ENCODE measurements at regions of chr2 and their contacts with region 1.

Region 1: DNA sequence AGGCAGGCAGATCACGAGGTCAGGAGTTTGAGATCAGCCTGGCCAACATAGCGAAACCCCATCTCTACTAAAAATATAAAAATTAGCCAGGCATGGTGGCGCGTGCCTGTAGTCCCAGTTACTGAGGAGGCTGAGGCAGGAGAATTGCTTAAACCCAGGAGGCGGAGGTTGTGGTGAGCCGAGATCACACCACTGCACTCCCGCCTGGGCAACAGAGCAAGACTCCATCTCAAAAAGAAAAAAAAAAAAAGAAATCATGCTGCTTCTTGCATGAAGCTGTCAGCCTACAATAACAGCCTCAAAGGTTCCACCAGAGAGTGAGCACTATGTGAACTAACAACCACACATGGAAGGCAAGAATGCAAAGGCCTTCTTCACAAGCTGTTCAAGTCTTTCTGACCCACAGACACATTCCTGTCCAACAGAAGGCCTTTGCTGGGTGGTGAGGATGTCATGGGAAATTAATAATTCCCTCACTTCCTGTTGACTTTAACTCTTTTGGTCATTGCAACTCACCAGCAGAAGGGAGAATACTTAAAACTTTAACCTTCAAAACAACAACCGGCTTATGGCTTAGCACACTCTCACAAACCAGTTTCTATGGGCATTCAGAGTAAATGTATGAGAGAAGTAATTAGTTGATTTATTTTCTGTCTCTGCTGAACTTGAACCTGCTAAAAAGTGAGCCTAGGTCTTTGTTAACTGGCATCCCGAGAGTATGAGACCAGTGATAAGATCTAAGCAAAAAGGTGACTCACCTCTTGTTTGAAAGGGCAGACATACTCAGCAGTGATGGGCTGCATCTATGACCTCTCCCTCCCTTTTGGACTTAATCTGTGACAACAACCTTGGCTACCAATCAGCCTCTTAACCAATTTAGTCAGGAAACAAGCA is 11.8 kb downstream of the PLEKHM3 start:
- DNase-seq: no peak
- H3K4me3 ChIP-seq: no peak overlapping the region
- H3K27ac ChIP-seq: no peak overlapping the region
- H3K4me1 ChIP-seq: no peaks in the 10 kb centered on the region
- H3K27me3 ChIP-seq: no peaks in the 10 kb centered on the region
- CTCF ChIP-seq: no peak
- POLR2A ChIP-seq: no peak

Region 2: DNA sequence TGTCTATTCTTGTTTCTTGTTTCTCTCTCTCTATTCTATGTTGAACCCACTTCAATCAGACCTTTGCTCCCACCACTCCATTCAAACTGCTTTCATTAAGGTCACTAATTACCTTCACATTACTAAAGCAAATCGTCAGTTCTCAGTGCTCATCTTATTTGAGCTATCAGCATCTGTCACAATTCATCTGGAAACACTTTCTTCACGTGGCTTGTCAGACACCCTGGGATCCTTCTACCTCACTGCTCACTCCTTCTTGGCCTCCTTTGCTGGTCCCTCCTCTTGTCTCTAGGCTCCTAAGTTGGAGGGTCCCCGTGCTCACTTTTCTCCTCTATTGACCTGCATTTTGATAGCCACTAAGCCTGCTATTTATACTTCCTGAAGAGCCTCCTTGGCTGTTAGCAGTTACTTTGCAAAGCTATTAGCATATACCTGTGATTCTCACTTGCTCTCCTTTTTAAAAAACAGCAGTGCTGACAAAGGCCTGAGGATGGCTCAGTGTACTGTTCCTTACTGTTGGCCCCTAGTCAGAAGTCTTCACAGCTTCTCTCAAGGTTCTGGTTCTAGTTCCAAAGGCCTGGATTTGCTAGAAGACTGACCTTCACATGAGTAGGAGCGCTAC is 68.4 kb before region 1 on chr2:
- intact Hi-C with region 1: loop called (anchors 2 kb)
- DNase-seq: no peak
- H3K4me3 ChIP-seq: no peak overlapping the region
- H3K27ac ChIP-seq: no peak overlapping the region
- H3K4me1 ChIP-seq: no peaks in the 10 kb centered on the region
- H3K27me3 ChIP-seq: no peaks in the 10 kb centered on the region
- CTCF ChIP-seq: no peak
- POLR2A ChIP-seq: no peak